Right ventricle myocardium inferior (tissue), 1 donor: ENCODE measurements at regions of chrX and their contacts with region 1.

Region 1: GRCh38 chrX:24054182-24055042 is at the start of gene EIF2S3:
- DNase-seq: peak; percentile 93
- ATAC-seq: peak; percentile 97
- total RNA-seq, gene EIF2S3: 66.8 TPM

Region 2: DNA sequence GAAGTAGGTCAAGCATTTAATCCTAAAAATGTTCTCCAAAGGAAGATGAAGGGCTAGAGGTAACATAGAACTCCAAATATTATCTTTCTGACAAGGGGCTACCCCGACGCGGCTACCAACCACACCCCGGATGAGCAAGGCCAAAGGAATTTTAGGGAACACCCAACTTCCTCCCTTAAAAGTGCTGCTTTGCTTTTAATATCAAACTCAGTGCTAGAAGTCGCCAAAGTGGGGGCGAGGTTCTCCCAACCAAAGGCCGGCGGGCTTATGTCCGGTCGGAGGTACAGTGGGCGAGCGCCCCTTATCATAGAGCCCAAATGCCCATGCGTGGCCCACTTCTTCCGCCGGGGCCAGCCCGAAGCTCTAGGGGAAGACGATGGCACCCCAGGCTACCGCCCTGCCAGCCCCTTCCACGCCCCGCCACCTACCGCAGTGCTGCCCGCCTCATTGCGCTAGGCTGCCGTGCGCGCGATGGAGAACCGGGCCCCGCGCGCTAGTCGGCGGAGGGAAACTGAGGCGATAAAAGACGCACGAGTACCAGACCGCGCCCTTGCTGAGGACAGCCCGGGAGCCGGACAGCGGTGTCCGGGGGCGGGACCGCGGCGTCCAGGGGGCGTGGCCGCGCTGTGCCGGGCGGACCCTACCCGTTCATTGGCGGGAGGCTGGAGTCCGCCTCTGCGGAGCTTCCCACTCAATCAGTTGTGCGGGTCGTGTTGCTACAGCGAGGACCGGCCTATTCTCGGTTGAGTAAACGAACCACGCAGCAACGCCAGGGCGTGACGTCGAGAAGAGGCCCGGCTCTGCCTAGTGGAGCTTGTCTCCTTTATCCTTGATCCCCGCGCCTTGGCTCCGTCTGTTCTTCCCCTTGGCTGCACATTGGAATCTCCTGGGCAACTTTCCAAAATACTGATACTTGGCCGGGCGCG is 311.5 kb before region 1 on chrX and contains the start of gene ACOT9:
- intact Hi-C with region 1: loop called (anchors 5 kb)
- DNase-seq: peak; percentile 95
- ATAC-seq: peak; percentile 99
- total RNA-seq, gene ACOT9: 50.1 TPM

Region 3: GRCh38 chrX:23907498-23908218 is 146.8 kb before region 1 on chrX and contains the starts of genes APOO and CXorf58:
- intact Hi-C with region 1: loop called (anchors 2 kb)
- DNase-seq: peak; percentile 96
- ATAC-seq: peak; percentile 98
- total RNA-seq, gene APOO: 112 TPM
- total RNA-seq, gene CXorf58: 0.32 TPM

Region 4: GRCh38 chrX:24024819-24025740 is 29.3 kb before region 1 on chrX:
- intact Hi-C with region 1: loop called (anchors 1 kb)
- DNase-seq: peak; percentile 92
- ATAC-seq: peak; percentile 95

Region 5: DNA sequence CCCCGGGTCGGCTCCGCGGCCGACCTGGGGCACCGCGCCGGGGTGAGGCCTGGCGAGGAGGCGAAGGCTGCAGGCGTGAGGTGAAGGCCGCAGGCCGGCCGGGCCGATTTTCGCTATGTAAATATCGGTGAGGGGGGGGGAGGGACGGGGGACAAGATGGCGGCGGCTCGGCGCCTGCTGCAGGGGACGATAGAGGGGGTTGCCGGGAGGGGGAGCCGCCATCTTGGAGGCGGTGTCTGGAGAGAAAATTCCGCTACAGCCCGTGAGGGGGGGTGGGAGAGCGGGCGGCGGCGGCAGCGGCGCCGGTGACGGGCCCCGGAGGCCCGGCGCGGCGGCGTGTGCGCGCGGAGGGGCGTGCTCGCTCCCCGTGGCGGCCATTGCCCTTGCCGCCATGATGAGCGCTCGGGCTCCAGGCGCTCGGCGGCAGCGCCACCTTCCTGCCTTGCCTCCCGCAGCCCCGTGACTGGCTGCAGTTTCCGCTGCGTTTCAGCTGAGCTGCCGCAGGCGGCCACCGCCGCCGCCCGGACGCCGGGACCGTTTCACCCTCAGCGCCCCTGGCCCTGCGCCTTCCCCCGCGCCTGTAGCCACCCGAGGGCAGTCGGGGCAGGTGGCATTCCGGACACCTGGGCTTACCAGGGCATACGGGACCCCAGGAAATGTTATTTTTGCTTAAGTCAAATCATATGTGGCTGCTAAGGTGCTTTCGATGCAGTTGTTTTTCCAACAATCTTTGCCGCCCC is 95.8 kb after region 1 on chrX:
- intact Hi-C with region 1: loop called (anchors 10 kb)
- DNase-seq: peak; percentile 90
- ATAC-seq: peak; percentile 89